PC-3 (cell line): ENCODE measurements at regions of chr17 and their contacts with region 1.

Region 1: DNA sequence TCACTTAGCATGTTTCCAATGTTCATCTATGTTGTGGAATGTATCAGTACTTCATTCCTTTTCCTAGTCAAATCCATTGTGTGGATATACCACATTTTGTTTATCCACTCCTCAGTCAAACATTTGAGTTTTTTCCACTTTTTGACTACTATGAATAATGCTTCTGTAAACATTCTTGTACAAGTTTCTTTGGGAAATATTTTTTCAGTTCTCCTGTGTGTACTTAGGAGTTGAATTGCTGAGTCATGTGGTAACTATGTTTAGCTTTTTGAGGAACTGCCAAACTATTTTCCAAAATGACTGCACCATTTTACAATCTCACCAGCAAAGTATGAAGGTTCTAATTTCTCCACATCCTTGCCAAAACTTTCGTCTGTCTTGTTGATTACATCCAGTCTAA is 223.7 kb upstream of the AXIN2 start:
- DNase-seq: peak; percentile 99
- ATAC-seq: peak; percentile 80
- H3K4me3 ChIP-seq: no peak overlapping the region; the same call in 1 of the 2 replicates
- H3K27ac ChIP-seq: peak overlapping the region; percentile 88
- H3K4me1 ChIP-seq: peaks cover 36% of the 10 kb centered on the region
- H3K27me3 ChIP-seq: no peaks in the 10 kb centered on the region
- CTCF ChIP-seq: no peak

Region 2: GRCh38 chr17:65556014-65556909 is 228.8 kb before region 1 on chr17:
- CTCF ChIA-PET with region 1: no interaction called
- POLR2A ChIA-PET with region 1: interaction called, 15 read pairs
- intact Hi-C with region 1: loop called (anchors 1 kb)
- DNase-seq: peak; percentile 80
- ATAC-seq: peak; percentile 9; the same call in 1 of the 2 replicates
- H3K4me3 ChIP-seq: no peak overlapping the region
- H3K27ac ChIP-seq: no peak overlapping the region
- H3K4me1 ChIP-seq: 0 out of 2 replicates have a peak, but pooled peaks cover 3% of the 10 kb centered on the region
- H3K27me3 ChIP-seq: peaks cover 10% of the 10 kb centered on the region
- CTCF ChIP-seq: peak; percentile 96

Region 3: GRCh38 chr17:65627891-65628659 is 157.0 kb before region 1 on chr17:
- CTCF ChIA-PET with region 1: no interaction called
- POLR2A ChIA-PET with region 1: no interaction called
- intact Hi-C with region 1: loop called (anchors 1 kb)
- DNase-seq: peak; percentile 98
- ATAC-seq: peak; percentile 99
- H3K4me3 ChIP-seq: peak overlapping the region; percentile 29; the same call in 1 of the 2 replicates
- H3K27ac ChIP-seq: peak overlapping the region; percentile 63
- H3K4me1 ChIP-seq: peaks cover 25% of the 10 kb centered on the region
- H3K27me3 ChIP-seq: no peaks in the 10 kb centered on the region
- CTCF ChIP-seq: no peak

Region 4: DNA sequence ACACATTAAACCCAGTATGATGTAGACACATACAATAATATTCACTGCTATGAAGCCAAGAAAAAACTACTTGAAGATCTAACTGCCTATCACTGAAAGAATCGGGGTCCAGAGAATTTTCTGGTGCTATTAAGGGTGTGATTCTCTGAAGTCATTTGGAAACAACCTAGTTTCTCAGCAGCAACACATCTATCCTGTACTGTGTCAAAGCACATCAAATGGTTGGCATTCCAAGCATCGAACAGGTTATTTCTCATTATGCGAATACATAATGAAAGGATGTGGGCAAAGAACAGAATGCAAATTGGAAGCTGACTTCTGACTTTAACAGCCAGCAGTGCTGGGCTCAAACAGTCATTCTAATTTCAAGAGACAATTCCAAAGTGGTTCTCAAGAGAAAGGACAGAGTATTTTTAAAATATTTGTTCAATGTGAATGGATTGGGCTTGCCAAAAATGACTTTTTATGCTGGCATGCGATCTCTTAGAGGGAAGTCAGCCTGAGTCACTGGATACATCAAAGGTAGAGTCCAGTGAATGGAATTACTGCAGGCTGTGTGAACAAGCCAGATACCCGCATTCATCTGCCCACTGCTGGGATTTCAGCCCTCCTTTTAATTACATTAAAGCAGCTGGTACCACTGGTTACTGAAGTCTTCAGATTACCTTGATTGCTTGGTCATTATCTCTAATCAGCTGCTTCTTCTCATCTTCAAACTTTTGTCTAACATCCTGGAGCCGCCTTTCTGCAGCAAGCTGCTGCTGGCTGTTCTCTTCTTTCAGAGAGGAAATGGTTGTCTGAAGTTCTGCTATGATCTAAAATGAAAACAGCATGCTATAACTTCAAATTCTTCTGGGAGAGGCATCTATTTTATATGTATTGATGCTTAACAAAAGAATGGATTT is 42.5 kb before region 1 on chr17:
- CTCF ChIA-PET with region 1: no interaction called
- POLR2A ChIA-PET with region 1: no interaction called
- intact Hi-C with region 1: loop called (anchors 1 kb)
- DNase-seq: peak; percentile 95
- ATAC-seq: peak; percentile 99
- H3K4me3 ChIP-seq: peak overlapping the region; percentile 22
- H3K27ac ChIP-seq: peak overlapping the region; percentile 61
- H3K4me1 ChIP-seq: peaks cover 18% of the 10 kb centered on the region
- H3K27me3 ChIP-seq: no peaks in the 10 kb centered on the region
- CTCF ChIP-seq: no peak

Region 5: GRCh38 chr17:65800655-65801054 is 15.5 kb after region 1 on chr17:
- CTCF ChIA-PET with region 1: no interaction called
- POLR2A ChIA-PET with region 1: no interaction called
- intact Hi-C with region 1: no loop called
- DNase-seq: no peak
- ATAC-seq: no peak
- H3K4me3 ChIP-seq: no peak overlapping the region
- H3K27ac ChIP-seq: no peak overlapping the region
- H3K4me1 ChIP-seq: no peaks in the 10 kb centered on the region
- H3K27me3 ChIP-seq: no peaks in the 10 kb centered on the region
- CTCF ChIP-seq: no peak

Region 6: GRCh38 chr17:65820811-65821210 is 35.7 kb after region 1 on chr17:
- CTCF ChIA-PET with region 1: no interaction called
- POLR2A ChIA-PET with region 1: no interaction called
- intact Hi-C with region 1: loop called (anchors 2 kb)
- DNase-seq: no peak
- ATAC-seq: no peak
- H3K4me3 ChIP-seq: no peak overlapping the region
- H3K27ac ChIP-seq: peak overlapping the region; percentile 70
- H3K4me1 ChIP-seq: peaks cover 32% of the 10 kb centered on the region
- H3K27me3 ChIP-seq: no peaks in the 10 kb centered on the region
- CTCF ChIP-seq: no peak